Left ventricle myocardium inferior (tissue), 1 donor: ENCODE measurements at regions of chr14 and their contacts with region 1.

Region 1: GRCh38 chr14:77314043-77314442 is 6.6 kb downstream of the POMT2 start:
- DNase-seq: no peak
- H3K4me3 ChIP-seq: no peak overlapping the region
- H3K27ac ChIP-seq: no peak overlapping the region
- H3K4me1 ChIP-seq: peaks cover 39% of the 10 kb centered on the region
- H3K27me3 ChIP-seq: no peaks in the 10 kb centered on the region
- CTCF ChIP-seq: no peak

Region 2: GRCh38 chr14:76876076-76876475 is 438.0 kb before region 1 on chr14:
- intact Hi-C with region 1: loop called (anchors 10 kb)
- DNase-seq: peak; percentile 43
- H3K4me3 ChIP-seq: no peak overlapping the region
- H3K27ac ChIP-seq: no peak overlapping the region
- H3K4me1 ChIP-seq: no peaks in the 10 kb centered on the region
- H3K27me3 ChIP-seq: no peaks in the 10 kb centered on the region
- CTCF ChIP-seq: peak; percentile 98